ENCODE measurements at regions of chr2 and their contacts with region 1.

Region 1: DNA sequence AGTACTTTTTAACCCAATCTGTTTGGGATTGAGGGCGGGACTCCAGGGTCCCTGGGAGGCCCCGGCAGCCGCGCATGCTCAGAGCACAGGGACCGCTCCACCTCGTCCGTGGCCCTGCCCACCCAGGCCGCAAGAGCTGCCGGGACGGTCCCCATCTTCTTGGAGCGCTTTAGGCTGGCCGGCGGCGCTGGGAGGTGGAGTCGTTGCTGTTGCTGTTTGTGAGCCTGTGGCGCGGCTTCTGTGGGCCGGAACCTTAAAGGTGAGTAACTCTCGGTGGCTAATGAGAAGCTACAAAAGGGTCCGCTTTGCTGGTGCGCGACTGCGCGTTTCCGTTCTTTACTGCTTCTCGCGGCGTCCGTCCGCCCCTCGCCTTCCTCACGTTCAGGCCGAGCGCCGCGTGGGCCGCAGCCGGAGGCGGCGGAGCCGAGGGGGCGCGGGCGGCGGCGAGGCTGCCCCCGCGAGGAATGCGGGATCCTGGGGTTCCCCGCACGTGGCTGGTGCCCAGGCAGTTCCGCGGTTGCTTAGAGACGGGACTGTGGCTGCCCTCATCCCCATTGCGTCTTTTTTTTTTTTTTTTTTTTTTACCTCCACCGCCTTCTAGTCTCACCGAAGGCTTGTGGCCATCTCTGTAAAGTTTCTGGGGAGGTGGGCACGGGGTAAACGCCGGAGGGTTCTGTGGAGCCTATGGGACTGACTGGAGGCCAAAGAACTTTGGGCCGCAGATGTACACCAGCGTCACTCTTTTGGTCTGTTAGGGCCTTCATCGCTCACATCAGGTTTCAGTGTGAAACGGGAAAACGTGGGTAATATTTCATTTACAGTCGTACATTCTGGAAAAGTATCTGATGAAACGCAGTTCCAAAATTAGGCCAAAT is at the start of gene SSB:
- DNase-seq: peak; percentile 89
- ATAC-seq: peak; percentile 100
- H3K4me3 ChIP-seq: peak within 1 kb of the TSS; percentile 87
- H3K27ac ChIP-seq: peak within 1 kb of the TSS; percentile 94
- H3K4me1 ChIP-seq: peaks cover 4% of the 10 kb centered on the region
- H3K27me3 ChIP-seq: no peaks in the 10 kb centered on the region
- CTCF ChIP-seq: no peak
- POLR2A ChIP-seq: peak; percentile 79
- RAD21 ChIP-seq: no peak
- total RNA-seq, gene SSB: 41.2 and 137 TPM in 2 replicates

Region 2: DNA sequence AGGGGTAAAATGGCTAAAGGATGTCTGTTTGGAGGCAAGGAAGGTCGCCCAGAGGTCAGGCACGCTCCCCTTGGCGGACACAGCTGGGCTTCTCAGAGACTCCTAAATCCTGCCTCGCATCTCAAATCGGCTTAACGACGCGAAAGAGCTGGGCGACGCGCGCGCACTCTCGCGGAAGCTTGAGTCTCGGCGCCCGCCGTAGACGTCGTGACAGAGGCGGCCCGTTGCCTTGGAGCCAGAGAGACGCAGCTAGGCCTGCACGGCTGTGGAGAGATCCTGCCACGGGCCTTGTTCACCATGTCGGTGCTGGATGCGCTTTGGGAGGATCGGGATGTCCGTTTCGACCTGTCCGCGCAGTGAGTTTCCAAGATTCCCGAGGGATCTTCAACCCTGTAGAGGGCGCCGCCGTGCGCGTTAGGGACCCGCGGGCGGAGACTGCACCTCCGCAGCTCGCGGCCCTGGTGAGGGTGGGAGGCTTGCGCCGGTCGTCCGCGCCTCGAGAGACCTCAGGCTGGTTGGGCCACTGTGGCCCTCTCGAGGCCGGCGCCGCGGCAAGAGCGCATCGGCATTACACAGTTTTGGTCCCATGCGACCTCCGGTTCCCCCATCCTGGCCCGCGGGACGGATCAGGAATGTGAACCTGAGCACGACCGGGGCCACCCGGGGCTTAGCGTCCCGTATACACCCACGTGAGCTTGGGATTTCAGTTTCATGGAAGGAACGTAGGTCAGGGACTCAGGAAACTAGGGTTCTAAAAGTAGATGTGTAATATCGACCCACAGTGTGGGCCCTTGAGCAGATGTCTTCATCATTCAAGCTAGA is 319.5 kb before region 1 on chr2 and contains the start of gene BBS5:
- CTCF ChIA-PET with region 1: no interaction called
- POLR2A ChIA-PET with region 1: no interaction called
- dilution Hi-C with region 1: no loop called
- in situ Hi-C with region 1: no loop called
- intact Hi-C with region 1: loop called (anchors 2 kb)
- DNase-seq: peak; percentile 87
- ATAC-seq: peak; percentile 97
- H3K4me3 ChIP-seq: peak within 1 kb of the TSS; percentile 60
- H3K27ac ChIP-seq: peak within 1 kb of the TSS; percentile 52
- H3K4me1 ChIP-seq: peaks cover 8% of the 10 kb centered on the region
- H3K27me3 ChIP-seq: no peaks in the 10 kb centered on the region
- CTCF ChIP-seq: peak; percentile 54
- POLR2A ChIP-seq: no peak; the same call in 1 of the 2 replicates
- RAD21 ChIP-seq: peak; percentile 36
- total RNA-seq, gene BBS5: 1.4 and 1.9 TPM in 2 replicates

Region 3: DNA sequence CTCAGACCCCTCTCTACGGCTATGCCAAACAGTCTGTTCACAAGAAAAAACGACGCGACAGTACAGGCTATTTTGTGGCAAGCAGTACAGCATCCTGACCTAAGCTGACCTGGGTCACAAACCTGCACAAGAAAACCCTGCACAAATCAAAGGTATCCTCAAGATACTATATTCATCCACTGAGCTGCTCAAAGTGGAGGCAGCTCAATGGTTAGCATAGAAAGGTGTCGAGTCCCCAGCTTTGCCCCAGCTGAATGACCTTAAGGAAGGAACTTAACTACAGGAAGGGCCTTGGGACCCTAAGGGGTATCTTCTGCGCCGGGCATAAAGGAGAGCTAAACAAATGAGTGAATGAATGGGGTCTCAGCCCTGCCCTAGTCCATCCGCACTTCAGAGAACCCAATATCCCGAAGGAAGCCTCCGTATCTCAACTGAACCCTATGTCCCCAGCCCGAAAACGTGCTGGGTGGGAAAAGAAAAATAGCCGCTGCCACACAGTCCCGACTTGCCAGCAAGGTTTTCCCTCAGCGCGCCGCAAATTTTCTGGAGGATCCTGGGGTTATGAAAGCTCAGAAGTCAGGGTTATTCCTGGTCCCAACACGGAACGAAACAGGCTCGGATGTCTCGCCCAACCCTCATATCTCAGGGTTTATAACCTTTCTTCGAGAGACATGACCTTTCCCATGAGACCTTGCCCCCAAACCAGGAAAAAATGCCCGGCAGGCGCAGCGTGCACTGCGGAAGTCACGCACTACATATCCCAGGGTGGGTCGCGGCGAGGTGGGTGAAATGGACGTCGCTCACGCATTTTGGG is 225.6 kb before region 1 on chr2 and contains the start of gene FASTKD1:
- CTCF ChIA-PET with region 1: no interaction called
- POLR2A ChIA-PET with region 1: no interaction called
- dilution Hi-C with region 1: no loop called
- in situ Hi-C with region 1: no loop called
- intact Hi-C with region 1: loop called (anchors 10 kb)
- DNase-seq: peak; percentile 81
- ATAC-seq: peak; percentile 99
- H3K4me3 ChIP-seq: peak within 1 kb of the TSS; percentile 62
- H3K27ac ChIP-seq: peak within 1 kb of the TSS; percentile 41
- H3K4me1 ChIP-seq: no peaks in the 10 kb centered on the region
- H3K27me3 ChIP-seq: no peaks in the 10 kb centered on the region
- CTCF ChIP-seq: no peak
- POLR2A ChIP-seq: no peak
- RAD21 ChIP-seq: no peak
- total RNA-seq, gene FASTKD1: 11.5 and 16.9 TPM in 2 replicates

Region 4: DNA sequence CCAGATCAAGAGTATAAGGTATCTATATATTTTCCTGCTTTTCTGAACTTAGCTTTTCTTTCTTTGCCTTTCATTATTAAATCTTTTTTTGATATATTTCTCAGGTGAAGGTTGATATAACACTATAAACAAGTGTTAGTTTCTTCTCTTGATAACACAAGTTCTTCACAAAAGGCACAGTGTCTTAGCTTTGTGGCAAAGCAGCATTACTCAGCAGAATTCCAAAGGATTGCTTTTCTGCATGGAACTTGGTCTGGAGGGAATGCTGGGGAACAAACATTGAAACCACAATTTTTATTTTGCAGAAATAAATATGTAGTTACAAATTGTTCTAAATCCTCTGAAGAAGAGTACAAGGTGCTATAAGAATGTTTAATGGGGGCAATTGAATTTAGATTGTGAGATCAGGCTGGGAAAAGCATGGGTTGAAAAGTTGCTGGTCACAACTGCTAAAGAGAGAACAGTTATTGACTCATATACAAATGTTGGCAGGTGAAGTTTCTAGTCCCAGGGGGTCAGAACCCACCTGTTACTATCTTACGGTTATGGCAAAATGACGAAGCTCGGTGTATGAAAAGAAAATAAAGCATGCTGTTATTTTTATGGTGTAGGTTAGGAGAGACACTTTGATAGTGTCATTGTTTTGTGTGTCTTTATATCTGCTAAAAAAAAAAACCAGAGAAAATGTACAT is 96.5 kb after region 1 on chr2:
- CTCF ChIA-PET with region 1: interaction called, 10 read pairs
- POLR2A ChIA-PET with region 1: no interaction called
- dilution Hi-C with region 1: no loop called
- in situ Hi-C with region 1: no loop called
- intact Hi-C with region 1: no loop called
- DNase-seq: peak; percentile 52
- ATAC-seq: peak; percentile 83
- H3K4me3 ChIP-seq: no peak overlapping the region
- H3K27ac ChIP-seq: no peak overlapping the region
- H3K4me1 ChIP-seq: no peaks in the 10 kb centered on the region
- H3K27me3 ChIP-seq: no peaks in the 10 kb centered on the region
- CTCF ChIP-seq: no peak
- POLR2A ChIP-seq: no peak
- RAD21 ChIP-seq: no peak